ENCODE measurements at regions of chr6 and their contacts with region 1.

Region 1: DNA sequence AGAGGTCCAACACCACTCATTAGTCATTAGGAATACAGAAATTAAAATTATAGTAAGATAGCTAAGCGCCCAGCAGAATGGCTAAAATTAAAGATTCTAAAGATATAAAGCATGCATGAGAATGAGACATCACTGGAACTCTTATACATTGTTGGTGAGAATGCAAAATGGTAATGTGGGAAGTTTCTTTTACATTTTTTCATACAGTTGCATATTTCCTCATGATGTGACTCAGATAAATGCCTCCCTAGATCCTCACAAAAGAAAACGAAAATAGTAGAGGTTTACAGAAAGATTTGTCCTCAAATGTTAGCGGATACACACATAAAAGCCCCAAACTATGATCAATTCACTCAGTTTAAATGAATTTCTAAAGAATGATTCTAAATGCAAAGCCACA is 633.7 kb upstream of the GJE1 start:
- DNase-seq: no peak
- ATAC-seq: no peak

Region 2: GRCh38 chr6:141548969-141549368 is 50.0 kb after region 1 on chr6:
- intact Hi-C with region 1: loop called in 1 of 2 experiments (anchors 5 kb)
- DNase-seq: no peak
- ATAC-seq: no peak

Region 3: DNA sequence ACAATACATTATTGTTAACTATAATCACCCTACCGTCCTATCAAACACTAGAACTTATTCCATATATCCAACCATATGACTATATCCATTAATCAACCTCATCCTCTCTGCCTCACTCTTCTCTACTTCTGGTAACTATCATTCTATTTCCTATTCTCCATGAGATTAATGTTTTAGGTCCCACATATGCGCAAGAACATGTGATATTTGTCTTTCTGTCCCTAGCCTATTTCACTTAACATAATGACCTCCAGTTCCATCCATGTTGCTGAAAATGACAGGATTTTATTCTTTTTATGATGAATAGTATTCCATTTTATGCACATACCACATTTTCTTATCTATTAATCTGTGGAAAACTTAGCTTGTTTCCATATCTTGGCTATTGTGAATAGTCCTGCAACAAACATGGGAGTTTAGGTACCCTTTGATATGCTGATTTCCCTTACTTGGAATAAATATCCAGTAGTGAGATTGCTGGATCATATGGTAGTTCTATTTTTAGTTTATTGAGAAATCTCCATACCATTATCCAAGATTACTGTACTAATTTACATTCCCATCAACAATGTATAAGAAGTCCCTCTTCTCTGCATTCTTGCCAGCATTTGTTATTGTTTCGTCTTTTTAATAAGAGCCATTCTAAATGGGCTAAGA is 344.3 kb after region 1 on chr6:
- intact Hi-C with region 1: no loop called
- DNase-seq: no peak
- ATAC-seq: no peak

Region 4: GRCh38 chr6:142246960-142247359 is 748.0 kb after region 1 on chr6:
- intact Hi-C with region 1: no loop called
- DNase-seq: no peak
- ATAC-seq: no peak

Measured in left cardiac atrium (tissue), 4 donors.